ENCODE measurements at regions of chr4 and their contacts with region 1.

Region 1: GRCh38 chr4:89876548-89876947 is 18.1 kb upstream of the MMRN1 start:
- DNase-seq: no peak
- H3K4me3 ChIP-seq: no peak overlapping the region
- H3K27ac ChIP-seq: no peak overlapping the region
- H3K4me1 ChIP-seq: no peaks in the 10 kb centered on the region
- H3K27me3 ChIP-seq: no peaks in the 10 kb centered on the region
- CTCF ChIP-seq: no peak
- POLR2A ChIP-seq: no peak

Region 2: DNA sequence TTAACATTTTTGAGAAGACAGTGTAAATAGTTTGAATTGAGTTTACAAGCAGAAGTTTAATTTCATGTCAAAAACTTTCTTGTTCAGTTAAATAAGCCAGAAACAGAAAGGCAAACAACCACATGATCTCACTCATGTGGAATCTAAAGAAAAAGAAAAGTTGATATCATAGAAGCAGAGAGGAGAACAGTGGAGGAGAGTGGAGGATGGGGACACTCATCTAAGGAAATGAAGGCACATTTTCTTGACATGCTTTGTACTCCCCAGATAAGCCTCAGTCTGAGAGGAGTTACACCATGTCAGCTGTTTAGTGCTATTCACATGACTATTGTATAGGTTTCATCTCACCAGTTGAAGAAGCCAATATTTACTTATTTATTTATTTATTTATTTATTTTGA is 53.1 kb before region 1 on chr4:
- intact Hi-C with region 1: loop called (anchors 2 kb)
- DNase-seq: no peak
- H3K4me3 ChIP-seq: no peak overlapping the region
- H3K27ac ChIP-seq: no peak overlapping the region
- H3K4me1 ChIP-seq: no peaks in the 10 kb centered on the region
- H3K27me3 ChIP-seq: no peaks in the 10 kb centered on the region
- CTCF ChIP-seq: no peak
- POLR2A ChIP-seq: no peak